ENCODE measurements at regions of chr19 and their contacts with region 1.

Region 1: GRCh38 chr19:7427944-7428343 is 60.9 kb downstream of the PEX11G start:
- DNase-seq: peak; percentile 86
- H3K4me3 ChIP-seq: no peak overlapping the region
- H3K27ac ChIP-seq: peak overlapping the region; percentile 3
- H3K27me3 ChIP-seq: no peaks in the 10 kb centered on the region
- CTCF ChIP-seq: no peak

Region 2: DNA sequence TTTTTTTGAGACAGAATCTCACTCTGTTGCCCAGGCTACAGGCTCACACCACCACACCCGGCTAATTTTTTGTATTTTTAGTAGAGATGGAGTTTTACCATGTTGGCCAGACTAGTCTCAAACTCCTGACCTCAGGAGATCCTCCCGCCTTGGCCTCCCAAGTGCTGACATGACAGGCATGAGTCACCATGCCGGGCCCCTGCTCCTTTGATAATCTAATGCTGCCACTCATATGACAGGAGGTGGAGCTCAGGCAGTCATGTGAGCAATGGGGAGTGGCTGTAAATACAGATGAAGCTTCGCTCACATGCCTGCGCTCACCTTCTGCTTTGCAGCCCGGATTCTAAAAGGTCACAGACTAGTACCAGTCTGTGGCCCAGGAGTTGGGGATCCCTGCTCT is 54.1 kb before region 1 on chr19:
- CTCF ChIA-PET with region 1: no interaction called
- POLR2A ChIA-PET with region 1: interaction called, 11 read pairs
- DNase-seq: no peak
- H3K4me3 ChIP-seq: no peak overlapping the region
- H3K27ac ChIP-seq: no peak overlapping the region
- H3K27me3 ChIP-seq: peaks cover 9% of the 10 kb centered on the region
- CTCF ChIP-seq: no peak

Region 3: GRCh38 chr19:7397687-7398086 is 30.3 kb before region 1 on chr19:
- CTCF ChIA-PET with region 1: no interaction called
- POLR2A ChIA-PET with region 1: interaction called, 16 read pairs
- DNase-seq: peak; percentile 43
- H3K4me3 ChIP-seq: no peak overlapping the region
- H3K27ac ChIP-seq: peak overlapping the region; percentile 39
- H3K27me3 ChIP-seq: no peaks in the 10 kb centered on the region
- CTCF ChIP-seq: no peak

Region 4: GRCh38 chr19:7415163-7415858 is 12.6 kb before region 1 on chr19:
- CTCF ChIA-PET with region 1: interaction called, 3 read pairs
- POLR2A ChIA-PET with region 1: interaction called, 12 read pairs
- DNase-seq: peak; percentile 69
- H3K4me3 ChIP-seq: no peak overlapping the region
- H3K27ac ChIP-seq: no peak overlapping the region
- H3K27me3 ChIP-seq: no peaks in the 10 kb centered on the region
- CTCF ChIP-seq: no peak

Region 5: DNA sequence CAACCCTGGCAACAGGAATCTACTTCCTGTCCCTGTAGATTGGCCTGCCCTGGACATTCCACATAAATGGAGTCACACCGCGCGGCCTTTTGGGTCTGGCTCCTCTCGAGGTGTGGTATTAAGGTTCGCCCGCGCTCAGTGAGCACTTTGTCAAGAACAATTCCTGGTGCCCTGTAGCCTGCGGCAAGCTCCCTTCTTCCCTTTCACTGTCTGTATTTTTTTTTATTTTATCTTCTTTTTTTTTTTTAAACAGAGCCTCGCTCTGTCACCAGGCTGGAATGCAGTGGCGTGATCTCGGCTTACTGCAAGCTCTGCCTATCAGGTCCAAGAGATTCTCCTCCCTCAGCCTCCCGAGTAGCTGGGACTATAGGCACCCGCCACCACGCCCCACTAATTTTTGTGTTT is 32.6 kb after region 1 on chr19:
- CTCF ChIA-PET with region 1: no interaction called
- POLR2A ChIA-PET with region 1: no interaction called
- DNase-seq: no peak
- H3K4me3 ChIP-seq: no peak overlapping the region
- H3K27ac ChIP-seq: no peak overlapping the region
- H3K27me3 ChIP-seq: no peaks in the 10 kb centered on the region
- CTCF ChIP-seq: no peak

Region 6: GRCh38 chr19:7471696-7472615 is 44.0 kb after region 1 on chr19:
- CTCF ChIA-PET with region 1: no interaction called
- POLR2A ChIA-PET with region 1: no interaction called
- DNase-seq: no peak
- H3K4me3 ChIP-seq: no peak overlapping the region
- H3K27ac ChIP-seq: no peak overlapping the region
- H3K27me3 ChIP-seq: no peaks in the 10 kb centered on the region
- CTCF ChIP-seq: no peak